ENCODE measurements at regions of chr5 and their contacts with region 1.

Region 1: DNA sequence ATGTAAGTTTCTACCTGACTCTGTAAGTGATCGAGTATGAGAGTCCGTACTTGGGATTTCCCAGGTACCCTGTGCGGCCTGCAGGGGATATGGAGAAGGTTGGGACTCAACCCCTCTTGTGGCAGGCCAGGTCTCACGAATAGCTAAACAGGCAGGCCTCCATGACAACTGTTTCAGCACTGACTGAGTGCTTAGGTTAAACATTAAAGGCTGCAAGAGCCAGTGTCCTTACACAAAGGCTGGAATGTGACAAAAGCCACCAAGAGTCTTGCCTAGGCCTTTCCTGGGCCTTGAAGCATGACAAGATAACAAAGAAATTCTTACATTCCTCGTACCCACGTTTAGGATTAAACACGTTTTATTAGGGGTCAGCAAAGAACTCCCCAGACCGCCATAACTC is 58.6 kb downstream of the THBS4 start:
- DNase-seq: no peak
- H3K4me3 ChIP-seq: no peak overlapping the region
- H3K27ac ChIP-seq: no peak overlapping the region
- H3K4me1 ChIP-seq: no peaks in the 10 kb centered on the region
- H3K27me3 ChIP-seq: no peaks in the 10 kb centered on the region
- CTCF ChIP-seq: no peak
- POLR2A ChIP-seq: no peak

Region 2: GRCh38 chr5:80275347-80275746 is 181.6 kb after region 1 on chr5:
- intact Hi-C with region 1: loop called in 1 of 2 experiments (anchors 10 kb)
- DNase-seq: peak in 1 of 7 donors; percentile 27
- H3K4me3 ChIP-seq: no peak overlapping the region
- H3K27ac ChIP-seq: no peak overlapping the region
- H3K4me1 ChIP-seq: no peaks in the 10 kb centered on the region
- H3K27me3 ChIP-seq: no peaks in the 10 kb centered on the region
- CTCF ChIP-seq: peak in 5 of 6 experiments; percentile 22 to 42 (median 33)
- POLR2A ChIP-seq: no peak

Region 3: DNA sequence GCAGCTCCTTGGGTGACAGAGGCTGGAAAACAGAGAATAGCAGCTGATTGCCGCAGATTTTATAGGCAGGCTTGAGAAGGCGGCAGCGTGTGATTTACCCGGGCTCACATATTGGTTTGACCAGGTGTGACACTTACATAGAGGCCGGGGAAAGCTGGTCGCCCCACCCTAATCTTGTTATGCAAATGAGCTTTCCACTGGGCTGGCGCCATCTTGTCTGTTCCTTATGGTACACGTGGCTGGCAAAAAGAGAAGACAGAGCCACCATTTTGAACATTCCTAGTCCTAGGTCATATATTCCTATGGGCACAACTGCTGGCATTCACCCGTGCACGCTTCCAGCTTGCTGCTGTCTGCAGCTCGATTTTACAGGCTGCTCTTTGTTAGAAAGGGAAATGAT is 214.7 kb after region 1 on chr5:
- intact Hi-C with region 1: loop called (anchors 5 kb)
- DNase-seq: no peak
- H3K4me3 ChIP-seq: no peak overlapping the region
- H3K27ac ChIP-seq: no peak overlapping the region
- H3K4me1 ChIP-seq: no peaks in the 10 kb centered on the region
- H3K27me3 ChIP-seq: no peaks in the 10 kb centered on the region
- CTCF ChIP-seq: no peak
- POLR2A ChIP-seq: no peak

Region 4: DNA sequence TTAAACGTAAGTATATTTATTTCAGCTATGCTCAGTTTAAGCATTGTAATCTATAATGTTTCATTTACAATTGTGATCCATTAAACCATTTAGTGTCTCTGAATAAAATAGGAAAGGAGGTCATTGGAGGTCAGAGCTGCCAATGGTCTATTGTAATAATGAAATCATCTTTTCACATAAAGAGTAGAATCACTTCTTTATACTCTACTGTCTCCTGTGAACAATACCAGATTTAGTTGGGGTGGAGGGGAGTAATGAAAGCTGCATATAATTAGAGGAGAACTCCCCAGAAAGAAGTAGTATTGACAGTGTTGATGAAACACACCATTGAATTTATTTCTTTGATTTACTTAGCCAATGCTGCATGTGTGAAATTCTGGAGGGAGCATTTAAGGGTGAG is 279.0 kb after region 1 on chr5:
- intact Hi-C with region 1: no loop called
- DNase-seq: no peak
- H3K4me3 ChIP-seq: no peak overlapping the region
- H3K27ac ChIP-seq: no peak overlapping the region
- H3K4me1 ChIP-seq: no peaks in the 10 kb centered on the region
- H3K27me3 ChIP-seq: no peaks in the 10 kb centered on the region
- CTCF ChIP-seq: no peak
- POLR2A ChIP-seq: no peak